Breast epithelium (tissue), 4 donors: ENCODE measurements at regions of chr21 and their contacts with region 1.

Region 1: GRCh38 chr21:29217818-29218291 is 80.9 kb upstream of the BACH1 start:
- DNase-seq: no peak
- H3K4me3 ChIP-seq: no peak overlapping the region
- H3K27ac ChIP-seq: peak overlapping the region in 1 of 2 donors; percentile 41
- H3K4me1 ChIP-seq: no peaks in the 10 kb centered on the region
- H3K27me3 ChIP-seq: no peaks in the 10 kb centered on the region
- CTCF ChIP-seq: no peak
- POLR2A ChIP-seq: no peak

Region 2: DNA sequence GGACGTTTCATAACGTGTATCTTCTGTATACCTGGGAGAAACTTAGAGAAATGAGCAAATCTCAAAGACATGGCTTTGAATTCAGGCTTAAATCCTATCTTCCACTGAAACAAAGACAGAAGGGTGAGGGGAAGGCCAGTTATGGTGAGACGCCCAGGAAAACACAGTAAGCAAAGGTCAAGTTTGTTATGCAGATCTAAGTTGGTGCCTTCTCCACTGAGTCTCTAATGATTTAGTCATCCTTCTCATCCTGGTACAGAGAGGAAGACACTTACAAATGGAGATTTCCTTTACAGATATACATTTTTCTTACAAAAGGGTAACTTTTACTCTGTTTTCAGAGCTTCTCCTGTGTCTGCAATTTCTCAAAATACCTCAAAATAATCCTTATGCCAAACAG is 23.0 kb before region 1 on chr21:
- intact Hi-C with region 1: loop called (anchors 1 kb)
- DNase-seq: no peak
- H3K4me3 ChIP-seq: no peak overlapping the region
- H3K27ac ChIP-seq: no peak overlapping the region
- H3K4me1 ChIP-seq: no peaks in the 10 kb centered on the region
- H3K27me3 ChIP-seq: no peaks in the 10 kb centered on the region
- CTCF ChIP-seq: no peak
- POLR2A ChIP-seq: no peak

Region 3: GRCh38 chr21:29416268-29416667 is 198.4 kb after region 1 on chr21:
- intact Hi-C with region 1: no loop called
- DNase-seq: no peak
- H3K4me3 ChIP-seq: no peak overlapping the region
- H3K27ac ChIP-seq: no peak overlapping the region
- H3K4me1 ChIP-seq: no peaks in the 10 kb centered on the region
- H3K27me3 ChIP-seq: no peaks in the 10 kb centered on the region
- CTCF ChIP-seq: no peak
- POLR2A ChIP-seq: no peak

Region 4: GRCh38 chr21:30340441-30341241 is 1122.8 kb after region 1 on chr21:
- intact Hi-C with region 1: no loop called
- DNase-seq: no peak
- H3K4me3 ChIP-seq: no peak overlapping the region
- H3K27ac ChIP-seq: no peak overlapping the region
- H3K4me1 ChIP-seq: no peaks in the 10 kb centered on the region
- H3K27me3 ChIP-seq: no peaks in the 10 kb centered on the region
- CTCF ChIP-seq: peak; percentile 45 to 74 (median 69)
- POLR2A ChIP-seq: no peak